CD8-positive, alpha-beta memory T cell (primary cell): ENCODE measurements at regions of chr6 and their contacts with region 1.

Region 1: DNA sequence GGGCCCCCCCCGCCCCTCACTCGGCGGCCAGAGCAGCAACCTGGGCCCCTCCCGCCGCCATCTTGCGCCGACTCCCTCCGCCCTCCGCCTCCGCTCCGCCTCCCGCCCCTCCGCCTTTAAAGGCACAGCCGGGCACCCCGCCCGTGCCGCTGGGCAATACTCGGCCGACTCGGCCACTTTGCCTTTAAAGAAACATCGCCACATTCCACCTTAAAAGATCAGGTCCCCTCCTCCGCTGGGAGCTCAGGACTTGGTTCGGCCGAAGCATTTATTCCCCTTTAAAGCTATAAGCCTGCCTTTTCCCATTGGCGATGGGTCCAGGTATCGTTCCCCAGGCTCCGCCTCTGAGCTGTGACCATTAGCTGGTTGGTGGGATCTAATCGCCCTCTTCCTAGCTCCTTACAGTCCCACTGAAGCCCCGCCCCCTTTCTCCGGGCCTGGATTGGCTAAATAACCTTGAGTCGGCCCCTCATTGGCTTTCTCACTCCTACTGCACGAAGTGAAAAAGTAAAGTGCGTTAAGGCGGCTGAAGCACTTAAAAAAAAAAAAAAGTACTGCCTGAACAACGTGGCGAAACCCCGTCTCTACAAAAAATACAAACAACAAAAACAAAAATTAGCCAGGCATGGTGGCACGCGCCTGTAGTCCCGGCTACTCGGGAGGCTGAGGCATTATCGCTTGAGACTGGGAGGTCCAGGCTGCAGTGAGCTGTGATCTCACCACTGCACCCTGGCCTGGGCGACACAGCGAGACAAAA is at the start of gene ZBTB22:
- DNase-seq: peak; percentile 94 to 97 (median 96)
- H3K4me3 ChIP-seq: peak within 1 kb of the TSS; percentile 100
- H3K4me3 Mint-ChIP-seq: peak within 1 kb of the TSS; percentile 94 to 100 (median 100)
- H3K27ac ChIP-seq: peak within 1 kb of the TSS; percentile 72
- H3K27ac Mint-ChIP-seq: peak within 1 kb of the TSS; percentile 95 to 99 (median 98)
- H3K4me1 ChIP-seq: peaks cover 66% of the 10 kb centered on the region
- H3K4me1 Mint-ChIP-seq: peaks cover 71 to 84% (median 71%) of the 10 kb centered on the region in 3 donors
- H3K27me3 ChIP-seq: no peaks in the 10 kb centered on the region
- H3K27me3 Mint-ChIP-seq: peaks cover 0 to 3% of the 10 kb centered on the region in 2 donors
- total RNA-seq, gene ZBTB22: 6.9 to 7.8 TPM

Region 2: GRCh38 chr6:33271458-33272274 is 46.2 kb before region 1 on chr6 and contains the starts of genes RPS18 and VPS52:
- CTCF ChIA-PET with region 1: interaction called, 8 read pairs
- POLR2A ChIA-PET with region 1: interaction called, 10 read pairs
- DNase-seq: peak; percentile 83 to 97 (median 94)
- H3K4me3 ChIP-seq: peak within 1 kb of the TSS; percentile 79
- H3K4me3 Mint-ChIP-seq: peak within 1 kb of the TSS; percentile 98 to 100 (median 99)
- H3K27ac ChIP-seq: peak within 1 kb of the TSS; percentile 92
- H3K27ac Mint-ChIP-seq: peak within 1 kb of the TSS; percentile 98 to 100 (median 99)
- H3K4me1 ChIP-seq: peaks cover 49% of the 10 kb centered on the region
- H3K4me1 Mint-ChIP-seq: peaks cover 61 to 75% (median 73%) of the 10 kb centered on the region in 3 donors
- H3K27me3 ChIP-seq: no peaks in the 10 kb centered on the region
- H3K27me3 Mint-ChIP-seq: no peaks in the 10 kb centered on the region
- total RNA-seq, gene RPS18: 3,797 to 3,852 TPM
- total RNA-seq, gene VPS52: 57.2 to 58.5 TPM

Region 3: GRCh38 chr6:33288921-33289748 is 28.7 kb before region 1 on chr6 and contains the starts of genes PFDN6 and WDR46:
- CTCF ChIA-PET with region 1: interaction called, 11 read pairs
- POLR2A ChIA-PET with region 1: interaction called, 12 read pairs
- DNase-seq: peak; percentile 65 to 89 (median 84)
- H3K4me3 ChIP-seq: peak within 1 kb of the TSS; percentile 99
- H3K4me3 Mint-ChIP-seq: peak within 1 kb of the TSS; percentile 89 to 99 (median 97)
- H3K27ac ChIP-seq: peak within 1 kb of the TSS; percentile 83
- H3K27ac Mint-ChIP-seq: peak within 1 kb of the TSS; percentile 79 to 99 (median 96)
- H3K4me1 ChIP-seq: peaks cover 24% of the 10 kb centered on the region
- H3K4me1 Mint-ChIP-seq: peaks cover 37 to 52% (median 49%) of the 10 kb centered on the region in 3 donors
- H3K27me3 ChIP-seq: no peaks in the 10 kb centered on the region
- H3K27me3 Mint-ChIP-seq: no peaks in the 10 kb centered on the region
- total RNA-seq, gene PFDN6: 118 to 119 TPM
- total RNA-seq, gene WDR46: 112 to 117 TPM

Region 4: GRCh38 chr6:33746036-33746600 is 428.3 kb after region 1 on chr6:
- CTCF ChIA-PET with region 1: no interaction called
- POLR2A ChIA-PET with region 1: no interaction called
- DNase-seq: no peak
- H3K4me3 ChIP-seq: no peak overlapping the region
- H3K4me3 Mint-ChIP-seq: no peak overlapping the region
- H3K27ac ChIP-seq: no peak overlapping the region
- H3K27ac Mint-ChIP-seq: no peak overlapping the region
- H3K4me1 ChIP-seq: no peaks in the 10 kb centered on the region
- H3K4me1 Mint-ChIP-seq: peaks cover 4 to 5% (median 5%) of the 10 kb centered on the region in 3 donors
- H3K27me3 ChIP-seq: peaks cover 4% of the 10 kb centered on the region
- H3K27me3 Mint-ChIP-seq: peaks cover 12 to 21% of the 10 kb centered on the region in 2 donors